ENCODE measurements at regions of chr2 and their contacts with region 1.

Region 1: DNA sequence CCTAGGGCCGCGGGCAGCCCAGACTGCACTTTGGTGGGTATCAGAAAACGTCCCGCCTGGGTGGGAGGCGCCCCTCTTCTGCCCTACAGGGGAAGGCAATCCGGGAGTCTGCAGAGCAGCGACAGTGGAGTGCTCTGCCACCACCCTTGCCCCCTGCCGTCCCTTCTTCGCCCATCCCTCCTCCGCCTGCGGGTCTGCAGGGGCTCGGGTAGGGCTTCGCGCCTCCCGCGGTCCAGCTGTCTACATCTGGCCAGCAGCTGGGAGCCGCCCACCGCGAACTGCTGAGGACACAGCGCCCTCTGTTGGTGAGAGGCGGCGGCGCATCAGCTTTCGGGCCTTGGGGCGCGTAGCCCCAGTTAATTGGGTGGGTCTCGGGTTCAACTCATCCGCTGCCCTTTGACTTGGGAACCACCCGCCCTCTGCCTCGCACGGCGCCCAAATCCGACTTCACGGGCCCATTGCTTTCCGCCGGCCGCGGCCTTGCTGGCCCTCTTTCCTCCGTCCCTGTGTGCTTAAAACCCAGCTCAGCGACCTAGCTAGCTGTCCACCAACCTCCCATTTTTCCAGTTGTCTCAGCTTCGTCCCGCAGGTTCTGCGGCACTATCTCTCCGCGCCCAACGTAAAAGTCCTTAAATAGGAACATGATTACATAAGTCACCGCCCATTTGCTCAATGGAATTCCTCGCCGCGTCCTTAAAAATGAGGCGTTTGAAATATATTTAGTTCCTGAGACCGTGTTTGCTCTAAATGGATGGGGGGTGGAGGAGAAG is 17.6 kb downstream of the WNT10A start:
- DNase-seq: peak; percentile 58 to 88 (median 70)
- ATAC-seq: peak; percentile 79 to 88 (median 80)
- H3K4me3 ChIP-seq: peak overlapping the region in 9 of 12 donors; percentile 5 to 41 (median 14)
- H3K27ac ChIP-seq: no peak overlapping the region
- H3K4me1 ChIP-seq: peaks cover 0 to 33% (median 16%) of the 10 kb centered on the region in 12 donors
- H3K27me3 ChIP-seq: peaks cover 39 to 97% (median 86%) of the 10 kb centered on the region in 9 donors
- CTCF ChIP-seq: peak; percentile 87 to 97 (median 94)
- POLR2A ChIP-seq: no peak

Region 2: DNA sequence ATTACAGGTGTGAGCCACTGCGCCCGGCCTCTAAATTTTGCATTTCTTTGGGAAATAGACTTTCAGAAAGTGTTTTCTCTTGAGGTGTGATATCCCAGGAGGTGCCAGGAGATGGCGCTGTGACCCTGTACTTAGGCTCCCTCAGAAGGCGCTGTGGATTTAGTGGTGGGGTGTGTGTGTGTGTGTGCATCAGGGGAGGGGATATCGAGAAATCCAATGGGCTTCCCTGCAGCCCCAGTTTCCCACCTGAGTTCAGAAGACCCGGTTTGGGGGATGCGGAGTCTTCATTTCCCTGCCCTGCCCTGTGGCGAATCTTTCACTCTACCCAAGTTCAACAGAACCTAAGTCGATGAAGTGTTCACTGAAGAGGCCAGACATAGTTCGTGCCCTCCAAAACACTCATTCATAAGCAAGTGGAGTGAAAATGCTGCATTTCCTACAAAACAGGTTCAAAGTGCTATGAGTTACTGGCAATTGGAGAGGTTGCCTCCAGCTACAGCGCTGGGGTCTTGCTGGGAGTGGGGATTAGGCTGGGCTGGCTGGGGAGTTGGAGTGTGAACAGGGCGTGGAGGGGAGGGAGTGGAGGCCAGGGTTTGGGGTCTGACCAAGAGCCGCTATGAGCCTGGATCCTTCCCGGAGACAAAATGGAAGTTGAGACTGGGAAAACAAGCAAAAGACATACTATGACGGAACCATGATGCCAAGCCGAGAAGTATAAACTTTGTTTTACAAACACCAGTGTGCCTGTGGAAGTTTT is 45.2 kb before region 1 on chr2:
- intact Hi-C with region 1: loop called in 7 of 10 experiments (anchors 2 to 5 kb)
- DNase-seq: peak in 2 of 5 donors; percentile 36 to 53
- ATAC-seq: peak in 3 of 4 donors; percentile 48 to 70 (median 60)
- H3K4me3 ChIP-seq: no peak overlapping the region
- H3K27ac ChIP-seq: no peak overlapping the region
- H3K4me1 ChIP-seq: peaks cover 0 to 11% (median 0%) of the 10 kb centered on the region in 12 donors
- H3K27me3 ChIP-seq: peaks cover 0 to 78% (median 46%) of the 10 kb centered on the region in 9 donors
- CTCF ChIP-seq: peak; percentile 43 to 75 (median 63)
- POLR2A ChIP-seq: no peak

Region 3: DNA sequence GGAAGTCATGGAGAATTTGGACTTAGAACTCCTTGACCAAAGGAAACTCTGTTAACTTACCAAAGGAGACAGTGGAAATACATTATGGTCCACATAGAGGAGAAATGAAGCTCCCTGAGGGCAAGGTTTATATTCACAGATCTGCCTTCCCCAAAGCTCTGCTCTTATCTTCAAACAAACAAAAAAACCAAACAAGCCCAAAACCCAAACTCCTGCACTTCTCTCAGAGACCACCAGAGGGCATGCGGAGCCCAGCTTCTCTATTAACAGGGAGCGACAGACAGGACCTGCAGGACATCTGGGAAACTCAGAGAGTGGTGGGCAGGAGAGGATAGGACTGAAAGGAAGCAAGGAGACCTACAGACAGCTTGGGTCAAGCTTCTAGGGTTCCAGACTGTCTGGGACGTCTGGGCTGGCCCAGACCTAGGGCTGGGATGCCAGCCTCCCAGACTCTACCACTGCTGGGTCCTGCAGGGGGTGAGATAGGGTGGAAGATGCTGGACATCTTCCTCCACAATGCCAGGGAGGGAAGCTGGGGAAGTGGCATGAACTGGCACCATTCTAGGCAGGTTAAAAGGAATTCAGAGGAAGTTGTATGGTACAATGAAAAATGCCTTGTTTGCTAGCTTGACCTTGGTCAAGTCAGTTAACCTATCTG is 21.6 kb before region 1 on chr2:
- intact Hi-C with region 1: loop called in 5 of 10 experiments (anchors 1 to 2 kb)
- DNase-seq: peak in 4 of 5 donors; percentile 46 to 62 (median 53)
- ATAC-seq: peak in 3 of 4 donors; percentile 9 to 50 (median 48)
- H3K4me3 ChIP-seq: no peak overlapping the region
- H3K27ac ChIP-seq: no peak overlapping the region
- H3K4me1 ChIP-seq: peaks cover 0 to 32% (median 10%) of the 10 kb centered on the region in 12 donors
- H3K27me3 ChIP-seq: peaks cover 48 to 100% (median 89%) of the 10 kb centered on the region in 9 donors
- CTCF ChIP-seq: peak; percentile 84 to 96 (median 92)
- POLR2A ChIP-seq: no peak

Measured in heart left ventricle (tissue), 16 donors.